A549 (cell line): ENCODE measurements at regions of chr3 and their contacts with region 1.

Region 1: GRCh38 chr3:71693641-71694040 is 31.6 kb downstream of the EIF4E3 start:
- DNase-seq: no peak
- ATAC-seq: no peak
- H3K4me3 ChIP-seq: no peak overlapping the region
- H3K27ac ChIP-seq: no peak overlapping the region
- H3K4me1 ChIP-seq: peaks cover 22% of the 10 kb centered on the region
- CTCF ChIP-seq: no peak
- EP300 ChIP-seq: no peak
- POLR2A ChIP-seq: no peak
- RAD21 ChIP-seq: no peak

Region 2: GRCh38 chr3:71710906-71711494 is 17.4 kb after region 1 on chr3:
- CTCF ChIA-PET with region 1: interaction called, 10 read pairs
- POLR2A ChIA-PET with region 1: no interaction called
- DNase-seq: peak; percentile 51 to 70
- ATAC-seq: peak; percentile 70 to 90; a peak in 4 of 6 replicates
- H3K4me3 ChIP-seq: no peak overlapping the region
- H3K27ac ChIP-seq: no peak overlapping the region
- H3K4me1 ChIP-seq: peaks cover 16% of the 10 kb centered on the region
- CTCF ChIP-seq: peak; percentile 77
- EP300 ChIP-seq: no peak
- POLR2A ChIP-seq: no peak
- RAD21 ChIP-seq: peak; percentile 77 to 79

Region 3: DNA sequence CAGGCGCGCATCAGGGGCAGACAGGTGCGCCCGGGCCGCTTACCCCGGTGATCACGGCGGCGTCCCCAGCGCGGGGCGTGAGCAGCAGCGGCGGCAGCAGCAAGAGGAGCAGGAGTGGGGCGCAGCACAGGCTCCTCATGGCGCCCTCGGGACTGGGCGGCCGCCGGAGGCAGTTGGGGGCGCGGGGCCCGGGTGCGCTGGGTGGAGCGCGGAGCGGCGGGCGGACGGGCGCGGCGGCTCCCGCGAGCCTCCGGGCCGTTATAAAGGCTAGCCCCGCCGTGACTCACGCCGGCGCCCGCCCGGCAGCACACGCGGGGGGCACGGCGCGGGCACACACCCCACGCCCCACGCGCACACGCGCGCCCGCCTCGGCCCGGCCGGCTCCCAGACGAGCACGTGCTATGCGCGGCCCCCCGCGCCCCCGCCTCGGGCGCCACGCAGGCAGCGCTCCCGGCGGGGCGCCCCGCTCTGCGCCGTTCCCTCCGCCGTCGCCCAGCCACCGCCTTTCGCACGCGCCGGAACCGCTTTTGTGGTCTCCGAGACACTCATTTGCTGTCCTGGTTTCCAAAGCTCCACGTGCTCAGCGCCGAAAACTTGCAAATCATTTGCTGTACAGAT is 91.4 kb after region 1 on chr3 and contains the start of gene PROK2:
- CTCF ChIA-PET with region 1: no interaction called
- POLR2A ChIA-PET with region 1: no interaction called
- DNase-seq: no peak
- ATAC-seq: peak; percentile 54 to 59; a peak in 5 of 6 replicates
- H3K4me3 ChIP-seq: peak within 1 kb of the TSS; percentile 54
- H3K27ac ChIP-seq: peak within 1 kb of the TSS in 1 of 2 experiments; percentile 41; a peak in 2 of 6 replicates
- H3K4me1 ChIP-seq: 0 out of 3 replicates have a peak, but pooled peaks cover 3% of the 10 kb centered on the region
- CTCF ChIP-seq: no peak
- EP300 ChIP-seq: no peak
- POLR2A ChIP-seq: no peak
- RAD21 ChIP-seq: no peak
- polyA plus RNA-seq, gene PROK2: not detected in 2 replicates